ENCODE measurements at regions of chrX and their contacts with region 1.

Region 1: DNA sequence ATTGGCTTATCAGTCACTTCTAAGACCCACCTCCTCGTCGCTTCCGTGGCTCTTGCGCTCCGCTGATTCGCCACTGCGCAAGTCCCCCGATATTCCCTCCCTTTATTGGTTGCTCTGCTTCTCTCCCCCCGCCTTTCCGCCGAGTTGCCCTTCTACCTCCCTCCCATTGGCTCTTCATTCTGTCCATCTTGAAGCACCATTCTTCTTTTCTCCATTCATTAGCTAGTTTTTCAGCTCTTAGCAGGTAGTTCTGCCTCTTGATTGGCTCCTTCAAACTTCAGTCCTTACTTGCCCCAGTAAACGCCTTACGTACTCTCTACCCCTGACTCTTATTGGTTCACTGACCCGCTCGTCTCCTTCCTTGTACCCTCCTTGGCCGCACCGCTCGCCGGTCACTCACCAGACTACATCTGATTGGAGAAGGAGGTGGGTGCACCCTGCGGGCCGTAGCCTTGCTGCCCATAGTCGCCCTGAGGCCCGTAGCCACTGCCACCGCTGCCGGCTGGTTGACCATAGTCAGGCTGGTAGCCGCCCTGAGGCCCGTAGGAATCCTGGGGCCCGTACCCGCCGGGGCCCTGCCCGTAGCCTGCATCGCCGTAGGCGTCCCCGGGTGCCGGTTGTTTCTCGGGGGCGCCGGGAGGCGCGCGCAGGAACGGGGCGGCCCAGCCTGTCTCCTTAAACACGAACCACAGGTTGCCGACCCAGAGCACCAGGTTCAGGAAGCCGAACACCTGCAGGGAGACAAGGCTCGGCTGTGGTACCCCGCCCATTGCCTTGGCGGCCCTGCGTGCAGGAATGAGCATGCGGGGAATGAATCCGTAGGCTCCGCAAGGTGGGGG is 5.1 kb upstream of the PRICKLE3 start:
- DNase-seq: peak; percentile 86 to 95 (median 93)
- H3K4me3 ChIP-seq: peak overlapping the region; percentile 52 to 74
- H3K4me3 Mint-ChIP-seq: peak overlapping the region; percentile 77 to 96 (median 91)
- H3K27ac ChIP-seq: peak overlapping the region; percentile 69
- H3K27ac Mint-ChIP-seq: peak overlapping the region; percentile 47 to 98 (median 94)
- H3K4me1 ChIP-seq: peaks cover 18% of the 10 kb centered on the region
- H3K4me1 Mint-ChIP-seq: peaks cover 17 to 27% (median 22%) of the 10 kb centered on the region in 4 donors
- H3K27me3 ChIP-seq: no peaks in the 10 kb centered on the region
- H3K27me3 Mint-ChIP-seq: no peaks in the 10 kb centered on the region

Region 2: GRCh38 chrX:49155900-49156837 is 35.1 kb before region 1 on chrX:
- CTCF ChIA-PET with region 1: interaction called, 6 read pairs
- POLR2A ChIA-PET with region 1: interaction called, 4 read pairs
- intact Hi-C with region 1: loop called (anchors 5 kb)
- DNase-seq: peak; percentile 85 to 86 (median 85)
- H3K4me3 ChIP-seq: peak overlapping the region; percentile 29 to 56
- H3K4me3 Mint-ChIP-seq: peak overlapping the region; percentile 91 to 97 (median 93)
- H3K27ac ChIP-seq: peak overlapping the region; percentile 86
- H3K27ac Mint-ChIP-seq: peak overlapping the region; percentile 95 to 99 (median 97)
- H3K4me1 ChIP-seq: peaks cover 8% of the 10 kb centered on the region
- H3K4me1 Mint-ChIP-seq: peaks cover 9 to 23% (median 12%) of the 10 kb centered on the region in 4 donors
- H3K27me3 ChIP-seq: no peaks in the 10 kb centered on the region
- H3K27me3 Mint-ChIP-seq: no peaks in the 10 kb centered on the region

Region 3: DNA sequence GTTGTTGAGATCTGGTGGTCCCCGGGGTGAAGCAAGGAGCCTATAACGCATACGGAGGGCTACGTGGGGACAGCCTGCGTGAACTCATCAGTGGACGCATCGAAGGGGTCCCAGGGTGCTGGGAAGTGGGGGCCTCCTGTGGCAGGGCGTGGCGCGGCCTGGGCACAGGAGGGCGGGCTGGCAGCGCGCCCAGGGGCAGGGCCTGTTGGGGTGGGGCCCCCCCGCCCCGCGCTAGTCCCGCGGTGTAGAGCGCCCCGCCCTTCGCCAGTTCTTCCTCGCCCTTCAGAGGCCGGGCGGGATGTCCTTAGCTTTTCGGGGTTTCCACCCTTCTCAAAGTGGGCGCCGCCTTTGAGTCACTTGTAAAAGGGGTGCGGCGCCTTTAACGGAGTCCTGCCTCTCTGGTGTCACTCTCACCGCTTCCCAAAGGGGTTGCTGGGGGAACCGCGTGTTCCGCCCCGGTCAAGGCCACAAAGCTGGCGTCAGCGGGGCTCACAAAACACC is 18.9 kb before region 1 on chrX:
- CTCF ChIA-PET with region 1: interaction called, 27 read pairs
- POLR2A ChIA-PET with region 1: interaction called, 26 read pairs
- intact Hi-C with region 1: loop called (anchors 2 kb)
- DNase-seq: peak; percentile 49 to 75 (median 58)
- H3K4me3 ChIP-seq: peak overlapping the region; percentile 52 to 54
- H3K4me3 Mint-ChIP-seq: peak overlapping the region; percentile 84 to 91 (median 88)
- H3K27ac ChIP-seq: peak overlapping the region; percentile 76
- H3K27ac Mint-ChIP-seq: peak overlapping the region; percentile 85 to 93 (median 86)
- H3K4me1 ChIP-seq: peaks cover 27% of the 10 kb centered on the region
- H3K4me1 Mint-ChIP-seq: peaks cover 14 to 42% (median 23%) of the 10 kb centered on the region in 4 donors
- H3K27me3 ChIP-seq: no peaks in the 10 kb centered on the region
- H3K27me3 Mint-ChIP-seq: no peaks in the 10 kb centered on the region

Region 4: DNA sequence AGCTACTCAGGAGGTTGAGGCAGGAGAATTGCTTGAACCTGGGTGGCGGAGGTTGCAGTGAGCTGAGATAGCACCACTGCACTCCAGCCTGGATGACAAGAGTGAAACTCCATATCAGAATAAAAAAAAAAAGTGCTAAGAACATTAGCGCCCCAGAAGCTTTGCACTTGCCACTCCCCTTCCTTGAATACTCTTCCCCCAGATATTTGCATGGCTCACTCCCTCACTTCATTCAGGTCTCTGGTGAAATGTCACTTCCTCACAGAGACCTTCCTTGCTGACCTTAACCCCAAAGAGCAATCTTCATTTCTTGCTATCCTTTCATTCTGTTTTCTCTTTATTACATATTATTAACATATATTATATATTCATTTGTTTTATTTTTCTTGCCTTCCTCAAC is 30.6 kb after region 1 on chrX:
- CTCF ChIA-PET with region 1: no interaction called
- POLR2A ChIA-PET with region 1: no interaction called
- intact Hi-C with region 1: no loop called
- DNase-seq: no peak
- H3K4me3 ChIP-seq: no peak overlapping the region
- H3K4me3 Mint-ChIP-seq: no peak overlapping the region
- H3K27ac ChIP-seq: no peak overlapping the region
- H3K27ac Mint-ChIP-seq: no peak overlapping the region
- H3K4me1 ChIP-seq: no peaks in the 10 kb centered on the region
- H3K4me1 Mint-ChIP-seq: peaks cover 0 to 5% (median under 1%) of the 10 kb centered on the region in 4 donors
- H3K27me3 ChIP-seq: no peaks in the 10 kb centered on the region
- H3K27me3 Mint-ChIP-seq: no peaks in the 10 kb centered on the region

Region 5: DNA sequence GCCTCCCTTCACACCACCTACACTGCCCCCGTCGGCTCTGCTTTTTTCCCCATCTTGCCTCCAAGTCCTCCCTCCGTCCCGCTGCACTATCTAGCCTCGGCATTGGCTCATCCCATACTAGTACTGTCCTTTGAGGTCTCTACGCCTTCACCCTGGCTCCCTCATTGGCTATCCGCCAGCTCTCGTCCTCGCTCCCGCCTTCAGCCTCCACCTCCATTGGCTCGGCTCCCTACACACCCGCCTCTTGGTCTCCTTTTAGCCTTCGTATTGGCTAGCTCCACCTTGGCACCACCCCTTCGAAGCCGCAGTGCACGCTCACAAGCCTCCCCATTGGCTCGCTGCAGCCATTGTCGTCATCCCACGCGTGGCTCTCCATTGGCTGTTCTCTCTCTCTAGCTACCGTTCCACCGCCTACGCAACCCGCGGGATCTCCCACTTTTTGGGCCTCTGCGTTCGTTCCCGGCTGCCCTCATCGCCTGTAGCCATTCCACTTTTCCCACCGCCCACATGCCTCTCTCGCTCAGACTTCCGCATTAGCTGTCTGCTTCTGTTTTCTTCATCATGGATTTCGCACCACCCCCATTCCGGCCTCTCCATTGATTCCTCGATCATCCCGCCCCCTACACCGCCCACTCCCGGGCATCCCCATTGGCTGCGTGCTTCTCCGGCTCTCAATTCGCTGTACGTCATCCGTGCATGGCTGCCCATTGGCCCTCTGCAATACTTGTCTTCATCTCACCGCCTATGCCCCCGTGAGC is 77.9 kb after region 1 on chrX:
- CTCF ChIA-PET with region 1: interaction called, 15 read pairs
- POLR2A ChIA-PET with region 1: interaction called, 13 read pairs
- intact Hi-C with region 1: loop called (anchors 1 kb)
- DNase-seq: peak; percentile 92 to 98 (median 96)
- H3K4me3 ChIP-seq: peak overlapping the region; percentile 65 to 68
- H3K4me3 Mint-ChIP-seq: peak overlapping the region; percentile 89 to 99 (median 95)
- H3K27ac ChIP-seq: peak overlapping the region; percentile 95
- H3K27ac Mint-ChIP-seq: peak overlapping the region; percentile 99 to 100 (median 100)
- H3K4me1 ChIP-seq: peaks cover 47% of the 10 kb centered on the region
- H3K4me1 Mint-ChIP-seq: peaks cover 21 to 65% (median 47%) of the 10 kb centered on the region in 4 donors
- H3K27me3 ChIP-seq: no peaks in the 10 kb centered on the region
- H3K27me3 Mint-ChIP-seq: no peaks in the 10 kb centered on the region

Region 6: GRCh38 chrX:49637686-49638085 is 446.4 kb after region 1 on chrX:
- CTCF ChIA-PET with region 1: interaction called, 3 read pairs
- POLR2A ChIA-PET with region 1: no interaction called
- intact Hi-C with region 1: loop called (anchors 2 kb)
- DNase-seq: no peak
- H3K4me3 ChIP-seq: no peak overlapping the region
- H3K4me3 Mint-ChIP-seq: no peak overlapping the region
- H3K27ac ChIP-seq: no peak overlapping the region
- H3K27ac Mint-ChIP-seq: no peak overlapping the region
- H3K4me1 ChIP-seq: no peaks in the 10 kb centered on the region
- H3K4me1 Mint-ChIP-seq: no peaks in the 10 kb centered on the region
- H3K27me3 ChIP-seq: no peaks in the 10 kb centered on the region
- H3K27me3 Mint-ChIP-seq: no peaks in the 10 kb centered on the region

Region 7: GRCh38 chrX:49878834-49879659 is 687.8 kb after region 1 on chrX and contains the start of gene USP27X:
- CTCF ChIA-PET with region 1: no interaction called
- POLR2A ChIA-PET with region 1: no interaction called
- intact Hi-C with region 1: loop called (anchors 10 kb)
- DNase-seq: peak; percentile 78 to 87 (median 81)
- H3K4me3 ChIP-seq: peak within 1 kb of the TSS in 1 of 2 donors; percentile 55
- H3K4me3 Mint-ChIP-seq: peak within 1 kb of the TSS; percentile 78 to 88 (median 84)
- H3K27ac ChIP-seq: peak within 1 kb of the TSS; percentile 60
- H3K27ac Mint-ChIP-seq: peak within 1 kb of the TSS; percentile 82 to 91 (median 86)
- H3K4me1 ChIP-seq: peaks cover 17% of the 10 kb centered on the region
- H3K4me1 Mint-ChIP-seq: peaks cover 12 to 46% (median 23%) of the 10 kb centered on the region in 4 donors
- H3K27me3 ChIP-seq: no peaks in the 10 kb centered on the region
- H3K27me3 Mint-ChIP-seq: peaks cover 0 to 2% of the 10 kb centered on the region in 2 donors
- total RNA-seq, gene USP27X: 7.3 to 7.5 TPM

Measured in CD4-positive, alpha-beta memory T cell (primary cell).